ENCODE measurements at regions of chr18 and their contacts with region 1.

Region 1: DNA sequence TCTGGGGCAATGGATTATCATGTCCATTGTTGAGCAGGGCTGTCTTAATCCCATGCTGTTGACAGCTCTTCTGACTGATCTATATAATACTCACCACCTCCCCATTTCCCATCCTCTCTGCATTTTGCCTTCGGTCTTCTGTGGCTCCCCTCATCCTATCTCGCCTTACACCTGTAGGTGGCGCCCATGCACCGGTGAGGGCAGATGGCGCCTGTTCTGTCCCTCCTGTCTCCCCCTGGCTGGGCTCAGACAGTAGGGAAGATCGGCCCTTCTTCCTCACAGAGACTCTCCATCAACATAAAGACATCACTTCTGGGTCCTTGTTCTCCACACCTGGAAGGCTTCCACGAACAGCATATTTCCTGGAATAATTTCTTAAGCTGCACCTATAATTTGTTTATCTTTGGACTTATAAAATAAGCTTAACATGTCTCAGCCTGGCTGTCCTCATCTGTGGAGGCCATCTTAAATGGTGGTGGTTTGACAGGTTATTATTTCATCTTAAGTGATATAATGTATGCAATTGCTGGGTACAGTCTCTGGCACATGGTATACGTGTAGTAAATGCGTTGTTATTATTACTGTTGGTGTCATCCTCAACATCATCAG is 10.9 kb upstream of the CDH20 start:
- DNase-seq: peak; percentile 77
- H3K4me3 ChIP-seq: no peak overlapping the region
- H3K27ac ChIP-seq: no peak overlapping the region
- H3K4me1 ChIP-seq: no peaks in the 10 kb centered on the region
- H3K27me3 ChIP-seq: no peaks in the 10 kb centered on the region

Region 2: DNA sequence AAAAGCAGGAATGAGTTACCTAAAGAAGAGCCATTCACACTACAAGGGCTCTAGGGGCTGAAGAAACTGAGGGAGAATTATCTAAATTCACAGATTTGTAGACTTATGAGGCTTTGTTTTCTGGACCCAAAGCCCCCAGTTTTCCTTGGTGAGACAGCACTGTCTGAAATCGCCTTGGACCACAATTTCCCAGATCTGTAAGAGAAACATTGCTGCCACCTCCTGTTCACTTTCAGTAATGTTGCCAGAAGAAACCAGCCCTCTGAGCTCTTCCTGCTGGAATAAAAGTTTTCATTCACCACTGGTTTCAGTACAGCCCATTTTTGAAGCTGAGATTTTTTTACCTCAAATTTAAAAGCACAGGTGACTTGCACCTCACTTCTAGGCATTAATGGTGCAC is 180.1 kb after region 1 on chr18:
- in situ Hi-C with region 1: loop called (anchors 5 kb)
- DNase-seq: peak; percentile 78
- H3K4me3 ChIP-seq: no peak overlapping the region
- H3K27ac ChIP-seq: no peak overlapping the region
- H3K4me1 ChIP-seq: 0 out of 2 replicates have a peak, but pooled peaks cover 2% of the 10 kb centered on the region
- H3K27me3 ChIP-seq: no peaks in the 10 kb centered on the region

Region 3: GRCh38 chr18:61551586-61551985 is 229.2 kb after region 1 on chr18:
- in situ Hi-C with region 1: no loop called
- DNase-seq: peak; percentile 77
- H3K4me3 ChIP-seq: no peak overlapping the region
- H3K27ac ChIP-seq: no peak overlapping the region
- H3K4me1 ChIP-seq: peaks cover 3% of the 10 kb centered on the region; the same call in 1 of the 2 replicates
- H3K27me3 ChIP-seq: no peaks in the 10 kb centered on the region